Activated CD8-positive, alpha-beta T cell treated with anti-CD3 and anti-CD28 coated beads, Interleukin-2, amount 10 ng/mL, durations not matched to agents 7 days and 5 days (primary cell): ENCODE measurements at regions of chr19 and their contacts with region 1.

Region 1: DNA sequence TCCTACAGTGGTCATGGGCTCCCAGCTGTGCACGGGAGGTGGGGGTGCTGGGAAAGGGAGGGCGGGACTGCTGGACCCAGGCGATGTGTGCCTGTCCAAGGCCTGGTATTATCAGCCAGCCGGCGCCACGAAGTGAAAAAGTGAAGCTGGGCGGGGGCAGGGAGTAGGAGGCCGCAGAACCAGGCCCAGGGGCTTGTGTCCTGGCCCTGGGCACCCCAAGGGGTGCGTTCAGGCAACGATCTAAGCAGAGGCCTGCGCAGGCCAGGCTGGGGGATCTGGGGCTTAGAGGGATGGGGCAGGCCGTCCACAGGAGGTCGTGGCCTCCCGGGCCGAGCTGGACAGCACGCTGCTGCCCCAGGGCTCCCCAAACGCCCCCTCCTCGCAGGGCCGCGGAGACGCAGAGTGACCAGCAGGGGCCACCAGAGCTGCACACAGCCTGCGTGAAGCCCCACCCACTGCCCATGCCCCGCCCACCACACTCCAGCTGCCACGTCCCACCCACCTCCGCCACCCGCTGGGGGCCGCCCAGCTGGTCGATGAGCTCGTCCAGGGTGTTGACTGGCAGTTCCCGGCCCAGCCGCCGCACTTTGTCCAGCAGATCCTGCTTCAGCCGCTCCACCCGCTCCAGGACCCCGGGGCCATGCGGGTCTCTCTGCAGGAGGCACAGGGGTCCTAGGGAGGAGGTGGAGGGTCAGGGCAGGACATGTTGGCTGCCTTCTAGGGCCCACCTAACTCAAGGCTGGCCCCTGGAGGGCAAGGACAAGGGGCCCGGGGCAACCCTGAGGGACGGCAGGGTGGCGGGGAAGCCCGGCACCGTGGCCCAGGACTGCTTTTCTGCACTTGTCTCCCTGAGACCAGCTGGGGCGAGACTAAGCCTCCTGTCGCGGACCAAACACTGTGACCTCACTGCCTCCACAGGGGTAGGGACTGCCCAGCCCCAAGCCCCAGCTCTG is 9.5 kb downstream of the GPX4 start:
- DNase-seq: peak; percentile 90
- ATAC-seq: peak; percentile 80
- H3K4me3 Mint-ChIP-seq: no peak overlapping the region
- H3K27ac Mint-ChIP-seq: no peak overlapping the region
- H3K4me1 Mint-ChIP-seq: peaks cover 4% of the 10 kb centered on the region
- H3K27me3 Mint-ChIP-seq: no peaks in the 10 kb centered on the region

Region 2: GRCh38 chr19:1009041-1009975 is 104.0 kb before region 1 on chr19:
- CTCF ChIA-PET with region 1: no interaction called
- POLR2A ChIA-PET with region 1: no interaction called
- DNase-seq: no peak
- ATAC-seq: no peak
- H3K4me3 Mint-ChIP-seq: no peak overlapping the region
- H3K27ac Mint-ChIP-seq: no peak overlapping the region
- H3K4me1 Mint-ChIP-seq: peaks cover 2% of the 10 kb centered on the region
- H3K27me3 Mint-ChIP-seq: no peaks in the 10 kb centered on the region

Region 3: DNA sequence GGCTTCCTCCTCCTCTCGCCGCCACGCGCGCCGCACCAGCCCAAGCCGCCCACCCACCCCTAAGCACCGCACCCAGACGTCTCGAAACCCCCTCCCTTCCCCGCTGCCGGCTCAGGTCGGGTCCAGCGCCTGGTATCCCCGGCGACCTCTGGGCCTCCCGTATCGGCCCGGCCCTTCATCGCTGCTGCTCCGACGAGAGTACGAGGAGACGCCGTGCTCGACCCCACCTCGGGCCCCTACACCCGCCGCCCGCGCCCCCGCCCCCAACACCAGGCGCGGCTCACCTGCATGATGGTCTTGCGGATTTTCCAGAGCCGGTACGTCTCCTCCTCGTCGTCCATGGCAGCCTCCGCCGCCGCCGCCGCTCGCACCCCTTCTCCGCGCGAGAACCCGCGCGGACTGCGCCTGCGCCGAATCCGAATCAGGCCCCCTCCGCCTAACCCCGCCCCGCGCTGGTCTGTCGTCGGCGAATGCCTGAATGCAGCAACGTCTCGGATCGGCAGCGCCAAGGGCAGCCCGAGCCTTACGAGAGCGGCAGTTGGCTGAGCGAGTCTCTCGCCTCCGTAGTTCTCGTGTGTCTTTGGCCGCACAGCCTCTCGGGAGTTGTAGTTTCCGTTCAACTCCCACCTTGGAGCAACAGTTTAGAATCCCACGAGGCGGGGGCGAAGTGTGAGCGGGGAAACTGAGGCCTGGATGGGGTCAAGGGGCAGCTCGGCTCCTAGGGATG is 18.2 kb before region 1 on chr19 and contains the start of gene POLR2E:
- CTCF ChIA-PET with region 1: no interaction called
- POLR2A ChIA-PET with region 1: no interaction called
- DNase-seq: peak; percentile 98
- ATAC-seq: peak; percentile 96
- H3K4me3 Mint-ChIP-seq: peak within 1 kb of the TSS; percentile 93
- H3K27ac Mint-ChIP-seq: peak within 1 kb of the TSS; percentile 86
- H3K4me1 Mint-ChIP-seq: peaks cover 61% of the 10 kb centered on the region
- H3K27me3 Mint-ChIP-seq: no peaks in the 10 kb centered on the region
- total RNA-seq, gene POLR2E: 176 to 177 TPM

Region 4: GRCh38 chr19:1131738-1132551 is 18.6 kb after region 1 on chr19:
- CTCF ChIA-PET with region 1: interaction called, 18 read pairs
- POLR2A ChIA-PET with region 1: interaction called, 3 read pairs
- DNase-seq: peak; percentile 91
- ATAC-seq: peak; percentile 78
- H3K4me3 Mint-ChIP-seq: peak overlapping the region; percentile 85
- H3K27ac Mint-ChIP-seq: peak overlapping the region; percentile 89
- H3K4me1 Mint-ChIP-seq: peaks cover 37% of the 10 kb centered on the region
- H3K27me3 Mint-ChIP-seq: no peaks in the 10 kb centered on the region

Region 5: DNA sequence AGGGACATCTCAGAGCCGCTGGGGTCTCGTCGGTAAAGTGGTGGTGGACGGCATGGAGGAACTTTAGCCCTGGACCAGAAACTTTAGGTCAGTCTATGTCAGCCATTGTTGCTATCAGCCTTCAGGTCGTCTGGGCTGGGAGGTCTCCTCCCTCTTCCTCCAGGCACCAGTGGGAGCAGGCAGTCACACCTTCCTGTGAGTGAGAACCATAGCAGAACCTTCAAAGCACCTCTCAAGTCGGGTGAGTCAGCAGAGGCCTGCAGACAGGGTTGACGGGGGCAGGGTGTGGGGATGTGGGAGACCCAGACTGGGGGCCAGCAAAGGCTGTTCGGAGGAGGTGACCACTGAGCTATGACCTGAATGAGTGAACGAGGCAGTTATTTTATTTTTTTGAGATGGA is 76.1 kb after region 1 on chr19:
- CTCF ChIA-PET with region 1: interaction called, 17 read pairs
- POLR2A ChIA-PET with region 1: no interaction called
- DNase-seq: peak; percentile 64
- ATAC-seq: peak; percentile 59
- H3K4me3 Mint-ChIP-seq: no peak overlapping the region
- H3K27ac Mint-ChIP-seq: peak overlapping the region; percentile 62
- H3K4me1 Mint-ChIP-seq: peaks cover 23% of the 10 kb centered on the region
- H3K27me3 Mint-ChIP-seq: no peaks in the 10 kb centered on the region

Region 6: GRCh38 chr19:1205114-1206062 is 92.1 kb after region 1 on chr19 and contains the start of gene STK11:
- CTCF ChIA-PET with region 1: interaction called, 12 read pairs
- POLR2A ChIA-PET with region 1: interaction called, 3 read pairs
- DNase-seq: peak; percentile 99
- ATAC-seq: peak; percentile 97
- H3K4me3 Mint-ChIP-seq: peak within 1 kb of the TSS; percentile 97
- H3K27ac Mint-ChIP-seq: peak within 1 kb of the TSS; percentile 93
- H3K4me1 Mint-ChIP-seq: peaks cover 33% of the 10 kb centered on the region
- H3K27me3 Mint-ChIP-seq: no peaks in the 10 kb centered on the region
- total RNA-seq, gene STK11: 68.8 to 70.8 TPM